ENCODE measurements at regions of chr1 and their contacts with region 1.

Region 1: DNA sequence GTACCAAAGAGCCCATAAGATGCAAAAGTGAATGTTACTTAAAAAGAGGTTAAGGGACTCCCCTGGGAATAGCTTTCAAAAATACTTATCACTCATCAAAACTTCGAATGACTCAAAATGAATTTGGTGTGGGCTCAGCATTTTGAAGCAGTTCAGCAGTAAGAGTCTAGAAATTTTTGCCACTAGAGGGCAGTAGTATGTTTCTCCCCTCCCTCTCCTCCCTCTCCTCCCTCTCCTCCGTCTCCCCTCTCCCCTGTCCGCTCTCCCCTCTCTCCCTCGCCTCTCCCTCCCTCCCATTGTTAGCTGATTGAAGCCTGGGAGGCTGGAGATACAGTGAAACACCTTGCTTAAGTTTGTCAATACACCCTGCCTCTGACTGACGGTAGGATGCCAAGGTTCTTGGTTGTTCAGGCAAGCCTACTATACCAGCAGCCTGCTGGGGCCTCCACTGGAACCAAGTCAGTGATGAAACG is 70.8 kb upstream of the TENT5C start:
- DNase-seq: no peak
- ATAC-seq: peak; percentile 81 to 95 (median 88)
- H3K4me3 ChIP-seq: no peak overlapping the region
- H3K27ac ChIP-seq: no peak overlapping the region
- H3K4me1 ChIP-seq: no peaks in the 10 kb centered on the region
- H3K27me3 ChIP-seq: no peaks in the 10 kb centered on the region
- CTCF ChIP-seq: peak; percentile 73

Region 2: GRCh38 chr1:117674521-117675397 is 139.7 kb after region 1 on chr1:
- intact Hi-C with region 1: loop called in 1 of 2 experiments (anchors 2 kb)
- DNase-seq: no peak
- ATAC-seq: peak in 3 of 4 donors; percentile 16 to 27 (median 21)
- H3K4me3 ChIP-seq: no peak overlapping the region
- H3K27ac ChIP-seq: peak overlapping the region; percentile 37
- H3K4me1 ChIP-seq: peaks cover 57% of the 10 kb centered on the region
- H3K27me3 ChIP-seq: no peaks in the 10 kb centered on the region
- CTCF ChIP-seq: peak; percentile 22